Tibial artery (tissue), 4 donors: ENCODE measurements at regions of chr15 and their contacts with region 1.

Region 1: DNA sequence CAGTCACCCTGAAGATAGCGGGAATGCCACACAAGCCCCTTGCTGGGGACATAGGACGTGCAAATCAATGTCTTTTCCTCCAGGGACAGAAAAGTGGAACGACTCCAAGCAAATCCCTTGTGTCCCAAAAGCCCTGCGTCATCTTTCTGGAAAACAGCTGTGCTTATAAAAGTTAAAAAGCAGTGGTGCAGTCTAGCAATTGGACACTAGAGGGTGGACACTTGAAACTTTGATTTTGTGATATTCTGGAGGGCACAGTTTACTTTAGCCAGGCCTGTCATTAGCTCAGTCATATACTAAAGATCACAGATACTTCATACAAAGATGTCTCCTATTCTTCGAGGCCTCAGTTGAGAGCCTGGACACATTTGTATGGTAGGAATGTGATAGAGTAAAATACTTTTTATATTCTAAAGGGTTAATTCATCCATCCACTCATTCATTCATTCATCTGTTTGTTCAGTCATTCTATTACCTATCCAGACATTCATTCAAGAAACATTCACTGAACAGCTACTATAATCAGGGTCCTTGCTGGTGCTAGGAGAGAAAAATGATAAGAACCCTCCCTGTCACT is 63.8 kb upstream of the ANKRD34C start:
- DNase-seq: no peak
- H3K4me3 ChIP-seq: no peak overlapping the region
- H3K27ac ChIP-seq: peak overlapping the region; percentile 79 to 80
- H3K4me1 ChIP-seq: peaks cover 0 to 55% (median 23%) of the 10 kb centered on the region in 4 donors
- H3K27me3 ChIP-seq: no peaks in the 10 kb centered on the region
- CTCF ChIP-seq: peak; percentile 63 to 68

Region 2: DNA sequence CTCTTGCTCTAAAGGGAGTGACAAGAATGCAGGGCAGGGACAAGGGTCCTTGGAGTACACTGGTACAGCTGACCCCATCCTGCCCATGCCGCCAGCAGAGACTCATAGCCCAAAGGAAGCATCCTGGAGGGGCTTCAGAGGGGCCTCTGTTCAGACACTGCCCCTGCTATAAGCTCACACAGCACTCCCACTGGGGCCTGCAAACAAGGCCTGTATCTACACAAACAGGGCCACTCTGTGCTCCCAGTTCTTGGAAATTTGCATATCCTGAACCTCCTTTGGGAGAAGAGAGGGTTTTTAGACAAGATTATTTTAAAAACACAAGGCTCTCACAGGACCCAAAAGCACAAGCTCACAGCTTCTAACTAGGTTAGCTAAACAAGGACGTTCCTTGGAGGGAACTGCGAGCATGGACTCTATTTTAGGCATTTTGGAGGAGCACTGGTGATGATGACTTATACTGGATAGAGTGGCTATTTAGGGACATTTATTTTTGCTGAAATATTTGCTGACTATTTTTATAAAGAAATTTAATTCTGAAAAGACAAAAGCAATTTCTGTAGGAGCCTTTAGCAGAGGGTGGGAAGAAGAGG is 47.4 kb after region 1 on chr15:
- intact Hi-C with region 1: loop called (anchors 2 kb)
- DNase-seq: no peak
- H3K4me3 ChIP-seq: no peak overlapping the region
- H3K27ac ChIP-seq: peak overlapping the region; percentile 69 to 73
- H3K4me1 ChIP-seq: peaks cover 0 to 41% (median 20%) of the 10 kb centered on the region in 4 donors
- H3K27me3 ChIP-seq: no peaks in the 10 kb centered on the region
- CTCF ChIP-seq: no peak

Region 3: GRCh38 chr15:79310983-79311900 is 92.6 kb after region 1 on chr15 and contains the start of gene TMED3:
- intact Hi-C with region 1: loop called (anchors 5 kb)
- DNase-seq: peak; percentile 37 to 70
- H3K4me3 ChIP-seq: peak within 1 kb of the TSS; percentile 66 to 81
- H3K27ac ChIP-seq: peak within 1 kb of the TSS; percentile 46 to 48
- H3K4me1 ChIP-seq: peaks cover 0 to 26% (median 11%) of the 10 kb centered on the region in 4 donors
- H3K27me3 ChIP-seq: no peaks in the 10 kb centered on the region
- CTCF ChIP-seq: peak in 1 of 2 experiments; percentile 13